Mammary epithelial cell (primary cell): ENCODE measurements at regions of chr1 and their contacts with region 1.

Region 1: DNA sequence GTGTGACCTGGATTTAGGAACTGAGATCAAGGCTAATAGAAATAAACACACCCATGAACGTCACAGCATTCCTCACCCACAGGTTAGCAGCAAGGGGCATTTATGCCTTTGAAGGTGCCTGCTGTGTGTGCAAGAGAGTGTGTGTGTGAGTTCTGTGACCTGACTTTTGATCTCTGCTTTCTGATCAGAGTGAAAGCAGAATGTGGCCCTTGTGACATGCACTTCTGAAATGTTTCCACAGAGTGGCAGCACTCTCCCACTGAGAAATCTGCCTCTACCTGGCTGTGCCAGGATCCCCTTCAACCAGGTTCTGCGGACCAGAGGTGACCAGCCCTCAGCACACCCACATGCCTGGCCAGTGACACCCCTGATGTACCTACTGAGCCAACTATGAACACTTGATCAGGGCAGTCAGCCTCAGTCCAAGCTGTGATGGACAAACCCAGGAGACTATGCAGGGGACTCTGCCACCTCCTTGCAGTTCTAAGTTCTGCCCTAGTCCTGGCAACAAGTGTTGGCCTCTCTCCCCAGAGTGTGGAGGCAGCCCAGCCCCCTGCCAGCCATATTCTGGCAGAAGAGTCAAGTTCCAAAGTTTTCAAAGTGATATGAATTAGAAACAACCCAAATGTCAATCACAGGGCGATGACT is 41.0 kb downstream of the RXRG start:
- DNase-seq: peak; percentile 25
- H3K4me3 ChIP-seq: no peak overlapping the region
- H3K27ac ChIP-seq: no peak overlapping the region
- H3K4me1 ChIP-seq: no peaks in the 10 kb centered on the region
- H3K27me3 ChIP-seq: peaks cover 2% of the 10 kb centered on the region
- CTCF ChIP-seq: peak; percentile 60 to 79

Region 2: DNA sequence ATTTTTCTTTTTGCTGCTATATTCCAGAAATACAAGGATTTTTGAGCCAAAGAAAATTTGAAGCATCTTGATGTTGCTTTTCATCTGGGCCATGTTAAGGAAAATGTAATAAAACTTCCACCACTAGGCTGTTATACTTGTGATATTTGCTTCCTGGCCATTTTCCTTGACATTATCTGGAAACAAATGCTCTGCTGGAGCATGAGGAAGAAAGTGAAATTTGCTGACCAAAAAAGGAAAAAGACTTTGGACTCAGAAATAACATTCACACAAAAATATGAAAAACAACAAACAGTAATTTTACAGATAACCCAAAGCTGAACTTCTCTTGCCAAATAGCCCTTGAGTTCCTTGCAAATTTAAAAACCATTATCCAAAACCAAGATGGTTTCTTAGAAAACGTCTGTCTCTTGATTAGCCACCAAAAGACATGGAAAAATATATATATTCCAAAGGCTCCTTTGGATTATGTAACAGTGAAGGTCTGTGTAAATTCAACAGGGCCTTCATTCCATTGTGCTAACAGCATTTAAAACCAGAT is 391.9 kb before region 1 on chr1:
- CTCF ChIA-PET with region 1: no interaction called
- dilution Hi-C with region 1: no loop called
- in situ Hi-C with region 1: no loop called
- intact Hi-C with region 1: no loop called
- DNase-seq: no peak
- H3K4me3 ChIP-seq: no peak overlapping the region
- H3K27ac ChIP-seq: no peak overlapping the region
- H3K4me1 ChIP-seq: no peaks in the 10 kb centered on the region
- H3K27me3 ChIP-seq: no peaks in the 10 kb centered on the region
- CTCF ChIP-seq: no peak

Region 3: DNA sequence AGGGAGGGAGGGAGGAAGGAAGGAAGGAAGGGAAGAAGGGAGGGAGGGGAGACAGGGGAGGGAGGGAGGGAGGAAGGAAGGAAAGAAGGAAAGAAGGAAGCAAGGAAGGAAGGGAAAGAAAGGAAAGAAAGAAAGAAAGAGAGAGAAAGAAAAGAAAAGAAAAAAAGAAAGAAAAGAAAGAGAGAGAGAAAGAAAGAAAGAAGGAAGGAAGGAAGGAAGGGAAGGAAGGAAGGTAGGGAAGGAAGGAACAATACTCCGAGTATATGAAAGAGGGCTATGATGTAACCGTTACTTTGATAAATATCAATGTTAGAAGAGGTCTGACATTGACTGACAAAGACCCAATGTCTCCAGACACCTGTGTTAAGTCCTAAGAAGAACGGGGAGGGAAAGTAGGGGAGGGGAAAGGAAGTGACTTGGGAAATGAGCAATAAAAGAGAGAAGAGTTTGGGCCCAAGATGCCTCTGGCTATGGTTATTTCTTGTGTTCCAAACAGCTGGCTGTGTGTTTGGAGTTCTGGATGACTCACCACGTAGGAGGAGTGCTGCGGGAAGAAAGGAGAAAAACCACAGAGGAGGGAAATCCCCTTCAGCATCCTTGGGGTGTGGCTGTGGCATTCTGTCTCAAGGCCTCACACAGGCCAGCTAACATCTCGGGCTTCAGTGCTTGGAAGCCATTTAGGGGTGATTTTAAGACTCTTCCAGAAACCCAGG is 78.0 kb after region 1 on chr1:
- CTCF ChIA-PET with region 1: no interaction called
- dilution Hi-C with region 1: no loop called
- in situ Hi-C with region 1: no loop called
- intact Hi-C with region 1: loop called (anchors 5 kb)
- DNase-seq: peak; percentile 96
- H3K4me3 ChIP-seq: no peak overlapping the region
- H3K27ac ChIP-seq: no peak overlapping the region
- H3K4me1 ChIP-seq: peaks cover 5% of the 10 kb centered on the region
- H3K27me3 ChIP-seq: peaks cover 10% of the 10 kb centered on the region
- CTCF ChIP-seq: no peak

Region 4: GRCh38 chr1:165807613-165808012 is 403.7 kb after region 1 on chr1:
- CTCF ChIA-PET with region 1: no interaction called
- dilution Hi-C with region 1: no loop called
- in situ Hi-C with region 1: no loop called
- intact Hi-C with region 1: no loop called
- DNase-seq: peak; percentile 43
- H3K4me3 ChIP-seq: no peak overlapping the region
- H3K27ac ChIP-seq: no peak overlapping the region
- H3K4me1 ChIP-seq: no peaks in the 10 kb centered on the region
- H3K27me3 ChIP-seq: no peaks in the 10 kb centered on the region
- CTCF ChIP-seq: no peak